Activated T-helper 1 cell treated with anti-CD3 and anti-CD28 coated beads, Interleukin-12 subunit alpha, Interleukin-12 subunit beta, Interleukin-2, Interleukin-4 antibody, amounts not matched to agents 30 ng/mL and 10 ng/mL and 1 ng/mL, durations not matched to agents 14 hours and 24 hours and 36 hours (primary cell): ENCODE measurements at regions of chr9 and their contacts with region 1.

Region 1: GRCh38 chr9:87535817-87536539 is 38.3 kb downstream of the DAPK1 start:
- DNase-seq: peak; percentile 1
- H3K4me3 Mint-ChIP-seq: no peak overlapping the region
- H3K27ac Mint-ChIP-seq: peak overlapping the region; percentile 88
- H3K4me1 Mint-ChIP-seq: peaks cover 6% of the 10 kb centered on the region
- H3K27me3 Mint-ChIP-seq: no peaks in the 10 kb centered on the region

Region 2: DNA sequence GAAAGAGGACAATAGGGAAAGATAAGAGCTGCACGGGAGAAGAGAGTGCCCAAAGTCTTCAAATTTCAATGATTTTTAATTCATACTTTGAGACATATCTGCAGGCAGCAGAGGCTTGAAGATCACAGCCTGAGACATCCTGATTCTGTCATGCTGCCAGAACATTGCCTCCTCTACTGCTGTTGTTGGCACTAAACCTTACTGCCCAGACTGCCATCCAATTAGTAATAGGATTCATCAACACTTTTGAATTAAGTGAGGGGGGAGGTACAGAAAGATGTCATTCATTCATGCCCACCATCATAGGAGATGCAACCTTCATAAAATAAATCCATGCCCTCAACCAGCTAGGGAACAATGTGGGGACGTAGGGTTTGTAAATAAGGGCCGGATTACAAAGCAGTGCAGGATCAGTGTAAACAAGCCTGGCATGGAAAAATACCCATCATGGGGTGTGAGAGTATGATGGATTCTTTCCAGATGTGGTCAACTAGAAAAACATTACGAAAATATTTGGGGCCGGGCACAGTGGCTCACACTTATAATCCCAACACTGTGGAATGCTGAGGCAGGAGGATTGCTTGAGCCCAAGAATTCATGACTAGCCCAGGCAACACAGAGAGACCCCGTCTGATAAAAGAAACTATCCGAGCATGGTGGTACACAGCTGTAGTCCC is 160.4 kb before region 1 on chr9:
- intact Hi-C with region 1: loop called (anchors 10 kb)
- DNase-seq: no peak
- H3K4me3 Mint-ChIP-seq: no peak overlapping the region
- H3K27ac Mint-ChIP-seq: no peak overlapping the region
- H3K4me1 Mint-ChIP-seq: peaks cover 9% of the 10 kb centered on the region
- H3K27me3 Mint-ChIP-seq: peaks cover 3% of the 10 kb centered on the region

Region 3: GRCh38 chr9:87497604-87498045 is 38.4 kb before region 1 on chr9 and contains the start of gene DAPK1:
- intact Hi-C with region 1: loop called (anchors 1 kb)
- DNase-seq: no peak
- H3K4me3 Mint-ChIP-seq: no peak within 1 kb of the TSS
- H3K27ac Mint-ChIP-seq: no peak within 1 kb of the TSS
- H3K4me1 Mint-ChIP-seq: peaks cover 10% of the 10 kb centered on the region
- H3K27me3 Mint-ChIP-seq: peaks cover 51% of the 10 kb centered on the region
- total RNA-seq, gene DAPK1: 2.0 and 2.8 TPM in 2 replicates

Region 4: DNA sequence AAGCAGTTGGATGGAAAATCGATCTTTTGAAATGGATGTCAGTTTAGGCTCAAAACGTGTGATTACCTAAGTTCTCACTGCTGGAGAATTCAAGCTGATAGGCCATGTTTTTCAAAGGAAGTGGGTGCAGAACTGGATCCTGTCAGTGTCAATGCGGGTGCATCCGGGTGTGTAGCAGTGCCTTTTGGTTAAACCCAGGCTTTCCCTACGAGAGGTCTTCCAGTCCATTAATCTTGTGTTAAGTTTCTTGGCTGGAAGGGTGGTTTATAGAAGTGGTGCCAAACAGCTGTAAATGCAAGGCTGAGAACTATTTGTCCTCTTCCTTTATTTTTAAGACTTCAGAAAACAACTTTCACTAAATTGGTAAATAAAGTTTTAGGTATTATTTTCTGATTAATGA is 33.5 kb after region 1 on chr9:
- intact Hi-C with region 1: no loop called
- DNase-seq: no peak
- H3K4me3 Mint-ChIP-seq: no peak overlapping the region
- H3K27ac Mint-ChIP-seq: no peak overlapping the region
- H3K4me1 Mint-ChIP-seq: no peaks in the 10 kb centered on the region
- H3K27me3 Mint-ChIP-seq: no peaks in the 10 kb centered on the region

Region 5: GRCh38 chr9:87707805-87708506 is 172.0 kb after region 1 on chr9:
- intact Hi-C with region 1: loop called (anchors 2 kb)
- DNase-seq: no peak
- H3K4me3 Mint-ChIP-seq: no peak overlapping the region
- H3K27ac Mint-ChIP-seq: no peak overlapping the region
- H3K4me1 Mint-ChIP-seq: peaks cover 30% of the 10 kb centered on the region
- H3K27me3 Mint-ChIP-seq: peaks cover 33% of the 10 kb centered on the region